ENCODE measurements at regions of chrX and their contacts with region 1.

Region 1: DNA sequence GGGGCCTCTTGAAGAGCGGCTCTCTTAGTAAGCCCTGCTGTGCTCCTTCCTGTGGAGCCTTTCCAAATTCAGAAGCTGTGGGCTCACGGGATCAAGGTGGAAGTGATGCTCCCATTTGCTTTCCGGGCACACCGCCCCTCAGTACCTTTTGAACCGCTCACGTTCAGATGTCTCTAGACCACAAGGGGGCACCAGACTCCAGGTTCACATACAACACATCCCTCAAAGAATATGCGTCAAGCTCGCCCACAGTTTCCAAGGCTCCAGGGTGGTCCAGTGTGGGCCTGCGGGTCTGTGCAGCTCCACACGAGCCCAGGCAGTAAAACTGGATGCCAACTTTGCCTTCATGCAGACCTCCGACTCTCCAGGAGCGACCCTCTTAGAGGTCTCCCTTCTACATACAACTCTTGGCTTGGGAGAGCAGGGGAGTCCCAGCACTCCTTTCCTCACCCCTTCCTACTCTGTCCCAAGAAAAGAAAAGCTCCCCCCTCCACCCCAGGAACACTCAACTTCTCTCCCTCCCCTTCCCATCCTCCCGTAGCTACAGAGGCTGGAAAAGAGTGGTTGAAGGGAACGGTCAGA is 11.0 kb downstream of the SUPT20HL1 start:
- DNase-seq: peak; percentile 68
- ATAC-seq: no peak
- H3K4me3 ChIP-seq: no peak overlapping the region
- H3K4me3 Mint-ChIP-seq: peak overlapping the region; percentile 36
- H3K27ac ChIP-seq: no peak overlapping the region
- H3K27ac Mint-ChIP-seq: no peak overlapping the region
- H3K4me1 ChIP-seq: peaks cover 5 to 7% of the 10 kb centered on the region in 2 donors
- H3K4me1 Mint-ChIP-seq: peaks cover 8% of the 10 kb centered on the region
- H3K27me3 ChIP-seq: peaks cover 0 to 4% (median 0%) of the 10 kb centered on the region in 4 experiments
- H3K27me3 Mint-ChIP-seq: peaks cover 18% of the 10 kb centered on the region
- CTCF ChIP-seq: peak; percentile 69

Region 2: DNA sequence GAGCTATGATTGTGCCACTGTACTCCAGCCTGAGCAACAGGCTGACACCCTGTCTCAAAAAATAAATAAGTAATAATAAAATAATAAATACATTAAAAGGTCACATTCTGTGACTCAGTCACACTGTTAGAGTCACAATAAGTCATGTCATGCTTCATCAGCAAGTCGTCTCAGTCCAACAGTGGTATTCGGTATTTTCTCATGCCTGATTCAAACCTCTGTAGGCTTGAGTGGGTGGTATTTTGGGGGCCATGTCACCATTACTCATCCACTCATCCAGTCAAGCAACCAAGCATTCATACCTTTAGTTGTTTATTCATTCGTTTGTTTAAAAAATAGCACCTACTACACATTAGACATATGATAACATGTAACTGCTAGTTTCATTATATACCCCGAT is 104.5 kb before region 1 on chrX:
- CTCF ChIA-PET with region 1: no interaction called
- POLR2A ChIA-PET with region 1: no interaction called
- intact Hi-C with region 1: no loop called
- DNase-seq: no peak
- ATAC-seq: no peak
- H3K4me3 ChIP-seq: no peak overlapping the region
- H3K4me3 Mint-ChIP-seq: no peak overlapping the region
- H3K27ac ChIP-seq: no peak overlapping the region
- H3K27ac Mint-ChIP-seq: no peak overlapping the region
- H3K4me1 ChIP-seq: no peaks in the 10 kb centered on the region
- H3K4me1 Mint-ChIP-seq: peaks cover 1% of the 10 kb centered on the region
- H3K27me3 ChIP-seq: no peaks in the 10 kb centered on the region
- H3K27me3 Mint-ChIP-seq: peaks cover 2% of the 10 kb centered on the region
- CTCF ChIP-seq: no peak

Region 3: DNA sequence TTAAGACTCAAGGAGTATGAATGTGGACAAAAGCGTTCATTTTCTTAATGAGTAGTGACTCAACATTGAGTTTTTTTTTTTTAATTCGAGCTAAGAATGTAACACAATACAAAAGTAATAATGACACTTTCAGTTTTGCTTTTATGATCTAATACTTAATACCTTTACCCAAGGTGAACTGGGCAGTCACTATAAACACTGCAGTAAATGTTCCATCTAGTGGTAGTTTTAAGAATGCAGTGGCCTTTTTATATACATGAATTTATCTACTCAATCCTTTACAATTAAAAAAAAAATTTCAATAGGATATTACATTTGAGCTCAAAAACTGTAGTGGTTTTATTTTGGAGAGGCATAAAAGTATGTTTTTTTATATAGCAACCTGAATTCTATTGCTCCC is 127.5 kb after region 1 on chrX:
- CTCF ChIA-PET with region 1: interaction called, 42 read pairs
- POLR2A ChIA-PET with region 1: no interaction called
- intact Hi-C with region 1: loop called (anchors 1 kb)
- DNase-seq: peak; percentile 56
- ATAC-seq: peak; percentile 56
- H3K4me3 ChIP-seq: no peak overlapping the region
- H3K4me3 Mint-ChIP-seq: no peak overlapping the region
- H3K27ac ChIP-seq: peak overlapping the region in 1 of 2 donors; percentile 37
- H3K27ac Mint-ChIP-seq: no peak overlapping the region
- H3K4me1 ChIP-seq: peaks cover 3 to 6% of the 10 kb centered on the region in 2 donors
- H3K4me1 Mint-ChIP-seq: peaks cover 18% of the 10 kb centered on the region
- H3K27me3 ChIP-seq: no peaks in the 10 kb centered on the region
- H3K27me3 Mint-ChIP-seq: no peaks in the 10 kb centered on the region
- CTCF ChIP-seq: peak; percentile 66

Region 4: DNA sequence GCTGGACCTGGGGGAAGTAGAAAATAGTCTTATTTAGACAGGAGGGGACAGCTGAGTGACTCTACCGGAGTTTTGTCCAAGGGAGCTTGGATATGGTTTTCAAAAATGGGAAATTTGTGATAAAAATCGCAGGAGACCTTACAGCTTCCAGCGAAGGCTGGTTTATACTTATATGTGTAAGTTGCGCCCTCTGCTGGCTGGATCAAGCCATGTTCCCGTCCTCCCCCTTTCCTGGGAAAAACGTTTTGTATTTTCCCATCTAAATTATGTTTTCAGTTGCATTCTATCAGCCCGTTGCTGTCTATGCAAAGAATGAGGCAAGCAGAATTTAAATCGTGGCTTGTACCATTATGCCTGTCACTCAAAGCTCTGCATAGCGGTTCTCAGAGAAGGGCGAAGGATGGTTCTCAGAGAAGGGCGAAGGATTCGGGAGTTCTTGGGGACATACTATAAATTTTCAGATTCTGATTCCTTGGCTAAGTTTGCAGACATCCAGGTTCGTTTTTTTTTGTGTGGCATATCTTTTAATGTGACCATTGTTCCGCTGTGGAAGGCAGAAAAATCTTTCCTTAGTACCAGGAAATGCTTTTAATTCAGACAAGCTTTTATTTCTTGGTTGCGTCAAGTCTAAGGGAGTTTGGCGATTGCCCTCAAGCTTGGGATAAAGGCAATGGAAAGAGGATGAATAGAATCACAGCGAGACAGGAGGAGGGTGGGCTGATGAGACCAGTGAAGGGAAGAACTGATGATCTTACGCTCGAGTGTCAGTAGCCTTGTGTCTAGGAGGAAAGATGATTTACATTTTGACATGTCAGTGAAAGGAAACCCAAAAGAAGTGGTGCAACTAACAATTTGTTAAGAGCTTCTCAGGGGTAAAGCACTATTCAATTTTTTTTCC is 772.8 kb after region 1 on chrX:
- CTCF ChIA-PET with region 1: no interaction called
- POLR2A ChIA-PET with region 1: no interaction called
- intact Hi-C with region 1: loop called (anchors 5 kb)
- DNase-seq: peak; percentile 29
- ATAC-seq: no peak
- H3K4me3 ChIP-seq: no peak overlapping the region
- H3K4me3 Mint-ChIP-seq: no peak overlapping the region
- H3K27ac ChIP-seq: no peak overlapping the region
- H3K27ac Mint-ChIP-seq: no peak overlapping the region
- H3K4me1 ChIP-seq: no peaks in the 10 kb centered on the region
- H3K4me1 Mint-ChIP-seq: peaks cover 2% of the 10 kb centered on the region
- H3K27me3 ChIP-seq: no peaks in the 10 kb centered on the region
- H3K27me3 Mint-ChIP-seq: peaks cover 5% of the 10 kb centered on the region
- CTCF ChIP-seq: peak; percentile 68